B cell (primary cell): ENCODE measurements at regions of chr2 and their contacts with region 1.

Region 1: DNA sequence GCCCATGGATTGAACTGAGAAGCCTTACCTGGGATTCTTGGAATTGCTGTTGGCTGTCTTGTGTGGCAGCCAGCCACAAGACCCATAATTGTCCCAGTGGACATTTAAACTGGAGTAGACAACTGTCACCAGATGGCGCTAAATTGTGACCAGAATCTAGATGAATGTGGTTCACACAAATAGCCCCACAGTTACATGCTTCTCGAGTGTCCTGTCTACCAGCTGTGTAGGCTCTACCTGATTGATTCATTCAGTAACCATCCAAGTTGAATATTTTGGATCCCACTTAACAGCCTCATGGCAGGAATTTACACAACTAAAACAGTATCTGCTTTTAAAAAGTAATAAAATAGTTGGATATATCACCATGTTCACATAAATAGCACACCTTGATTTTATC is 73.2 kb downstream of the MAP4K4 start:
- DNase-seq: peak; percentile 59
- ATAC-seq: no peak
- H3K4me3 ChIP-seq: no peak overlapping the region
- H3K4me3 Mint-ChIP-seq: peak overlapping the region; percentile 30
- H3K27ac ChIP-seq: no peak overlapping the region
- H3K27ac Mint-ChIP-seq: peak overlapping the region; percentile 73
- H3K4me1 ChIP-seq: peaks cover 70 to 82% of the 10 kb centered on the region in 2 donors
- H3K4me1 Mint-ChIP-seq: peaks cover 91% of the 10 kb centered on the region
- H3K27me3 ChIP-seq: no peaks in the 10 kb centered on the region
- H3K27me3 Mint-ChIP-seq: no peaks in the 10 kb centered on the region
- CTCF ChIP-seq: peak; percentile 60

Region 2: DNA sequence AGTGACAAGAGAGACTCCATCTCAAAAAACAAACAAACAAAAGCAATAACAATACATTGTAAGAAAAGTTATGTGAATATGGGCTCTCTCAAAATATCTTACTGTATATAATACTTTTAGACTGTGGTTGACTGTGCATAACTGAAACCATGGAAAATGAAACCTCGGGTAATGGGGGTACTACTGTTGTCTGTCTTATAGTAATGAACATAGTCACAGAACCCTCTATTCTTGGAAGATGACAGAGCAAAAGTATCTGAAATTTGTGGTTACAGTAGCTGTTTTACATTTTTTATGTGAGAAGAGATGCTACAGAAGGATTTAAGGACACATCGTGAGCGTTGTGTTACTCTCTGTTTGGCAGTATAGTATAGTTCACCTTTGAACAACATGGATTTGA is 12.7 kb before region 1 on chr2:
- CTCF ChIA-PET with region 1: interaction called, 12 read pairs
- POLR2A ChIA-PET with region 1: interaction called, 3 read pairs
- intact Hi-C with region 1: loop called (anchors 2 kb)
- DNase-seq: peak; percentile 30
- ATAC-seq: no peak
- H3K4me3 ChIP-seq: no peak overlapping the region
- H3K4me3 Mint-ChIP-seq: peak overlapping the region; percentile 78
- H3K27ac ChIP-seq: peak overlapping the region in 1 of 2 donors; percentile 38
- H3K27ac Mint-ChIP-seq: peak overlapping the region; percentile 43
- H3K4me1 ChIP-seq: peaks cover 67 to 70% of the 10 kb centered on the region in 2 donors
- H3K4me1 Mint-ChIP-seq: peaks cover 72% of the 10 kb centered on the region
- H3K27me3 ChIP-seq: no peaks in the 10 kb centered on the region
- H3K27me3 Mint-ChIP-seq: no peaks in the 10 kb centered on the region
- CTCF ChIP-seq: no peak

Region 3: DNA sequence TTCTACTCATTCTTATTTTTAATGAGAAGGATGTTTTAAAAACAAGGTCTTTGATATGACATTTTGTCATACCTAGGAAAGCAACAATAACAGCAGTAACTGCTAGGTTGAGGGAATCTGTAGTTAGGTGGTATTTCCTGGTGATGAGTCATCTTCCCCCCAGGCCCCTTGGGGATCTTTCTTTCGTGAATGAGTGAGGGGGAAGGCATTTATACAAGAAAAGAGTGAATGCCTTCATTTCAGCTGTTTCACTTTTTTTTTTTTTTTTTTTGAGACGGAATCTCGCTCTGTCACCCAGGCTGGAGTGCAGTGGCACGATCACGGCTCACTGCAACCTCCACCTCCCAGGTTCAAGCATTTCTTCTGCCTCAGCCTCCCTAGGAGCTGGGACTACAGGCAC is 35.4 kb after region 1 on chr2:
- CTCF ChIA-PET with region 1: interaction called, 3 read pairs
- POLR2A ChIA-PET with region 1: no interaction called
- intact Hi-C with region 1: loop called (anchors 5 kb)
- DNase-seq: peak; percentile 58
- ATAC-seq: peak; percentile 91
- H3K4me3 ChIP-seq: no peak overlapping the region
- H3K4me3 Mint-ChIP-seq: peak overlapping the region; percentile 32
- H3K27ac ChIP-seq: peak overlapping the region in 1 of 2 donors; percentile 63
- H3K27ac Mint-ChIP-seq: peak overlapping the region; percentile 27
- H3K4me1 ChIP-seq: peaks cover 44 to 46% of the 10 kb centered on the region in 2 donors
- H3K4me1 Mint-ChIP-seq: peaks cover 79% of the 10 kb centered on the region
- H3K27me3 ChIP-seq: no peaks in the 10 kb centered on the region
- H3K27me3 Mint-ChIP-seq: no peaks in the 10 kb centered on the region
- CTCF ChIP-seq: no peak